Calu3 (cell line): ENCODE measurements at regions of chr20 and their contacts with region 1.

Region 1: GRCh38 chr20:40990542-40991120 is 38.0 kb upstream of the TOP1 start:
- DNase-seq: peak; percentile 91
- H3K4me3 Mint-ChIP-seq: no peak overlapping the region
- H3K27ac Mint-ChIP-seq: peak overlapping the region; percentile 70
- H3K4me1 Mint-ChIP-seq: peaks cover 18% of the 10 kb centered on the region
- H3K27me3 Mint-ChIP-seq: no peaks in the 10 kb centered on the region
- CTCF ChIP-seq: peak; percentile 85

Region 2: DNA sequence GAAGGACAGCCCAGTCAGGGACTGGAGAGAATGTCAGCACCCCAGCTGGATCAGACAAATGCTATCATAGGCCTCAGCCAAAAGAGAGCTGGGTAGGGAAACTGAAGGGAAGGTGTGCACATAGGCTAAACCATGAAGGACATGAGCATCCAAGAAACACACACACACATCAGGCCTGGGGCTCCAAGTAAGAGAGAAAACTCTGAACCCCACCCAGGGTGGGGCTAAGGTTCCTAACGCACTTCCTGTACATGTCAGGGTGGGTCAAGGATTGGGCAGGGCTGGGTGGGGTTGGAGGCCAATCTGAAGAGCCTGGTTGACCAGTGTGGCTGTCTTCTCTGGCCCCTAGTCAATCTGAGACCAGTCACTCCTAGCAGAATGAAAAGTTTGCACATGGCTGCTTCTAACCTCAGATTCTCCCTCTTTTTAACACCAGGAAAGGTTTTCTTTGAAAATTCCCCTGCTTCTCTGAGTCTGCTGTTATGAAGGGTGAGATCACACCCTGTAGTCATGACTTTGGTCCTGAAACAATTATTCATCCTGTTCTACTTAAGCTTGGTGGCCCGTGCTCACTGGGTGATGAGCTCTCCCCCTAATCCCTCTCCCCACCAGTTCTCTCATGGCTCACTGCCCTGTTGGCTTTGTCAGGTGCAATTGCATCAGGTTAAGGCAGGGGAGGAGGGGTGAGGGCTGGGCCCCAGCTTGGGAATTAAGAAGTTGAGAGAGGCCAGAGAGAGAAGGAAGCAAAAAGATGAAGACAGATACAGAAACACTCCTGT is 390.0 kb before region 1 on chr20:
- CTCF ChIA-PET with region 1: no interaction called
- intact Hi-C with region 1: no loop called
- DNase-seq: no peak
- H3K4me3 Mint-ChIP-seq: no peak overlapping the region
- H3K27ac Mint-ChIP-seq: no peak overlapping the region
- H3K4me1 Mint-ChIP-seq: no peaks in the 10 kb centered on the region
- H3K27me3 Mint-ChIP-seq: peaks cover 30% of the 10 kb centered on the region
- CTCF ChIP-seq: no peak

Region 3: DNA sequence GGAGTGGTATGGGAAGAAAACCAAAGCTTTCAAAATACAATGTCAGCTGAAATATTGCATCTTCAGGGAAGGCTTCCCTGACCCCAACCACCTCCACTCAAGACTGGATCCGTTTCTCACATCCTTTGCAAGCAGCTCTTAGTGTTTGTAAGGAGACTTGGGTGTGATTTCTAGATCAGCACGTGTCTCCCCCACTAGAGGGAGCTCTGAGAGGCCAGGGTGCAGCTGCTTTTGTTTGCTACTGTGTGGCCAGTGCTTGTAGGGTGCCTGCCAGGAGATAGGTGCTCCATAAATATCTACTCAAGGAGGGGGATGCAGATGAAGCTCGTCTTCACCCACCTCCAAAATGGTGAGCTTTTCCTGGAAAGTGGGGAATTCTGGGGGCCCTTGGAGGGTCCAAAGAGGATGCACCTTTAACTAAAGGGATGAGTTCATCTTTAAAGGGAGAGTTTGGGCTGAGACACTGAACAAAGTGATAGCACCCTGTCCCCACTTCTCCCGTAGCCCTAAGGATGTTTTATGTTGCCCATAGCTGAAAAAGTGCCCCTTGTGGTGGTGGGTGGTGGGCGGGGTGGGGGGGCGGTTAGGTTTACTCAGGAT is 249.0 kb before region 1 on chr20:
- CTCF ChIA-PET with region 1: no interaction called
- intact Hi-C with region 1: no loop called
- DNase-seq: peak; percentile 73
- H3K4me3 Mint-ChIP-seq: no peak overlapping the region
- H3K27ac Mint-ChIP-seq: no peak overlapping the region
- H3K4me1 Mint-ChIP-seq: no peaks in the 10 kb centered on the region
- H3K27me3 Mint-ChIP-seq: peaks cover 100% of the 10 kb centered on the region
- CTCF ChIP-seq: peak; percentile 65

Region 4: DNA sequence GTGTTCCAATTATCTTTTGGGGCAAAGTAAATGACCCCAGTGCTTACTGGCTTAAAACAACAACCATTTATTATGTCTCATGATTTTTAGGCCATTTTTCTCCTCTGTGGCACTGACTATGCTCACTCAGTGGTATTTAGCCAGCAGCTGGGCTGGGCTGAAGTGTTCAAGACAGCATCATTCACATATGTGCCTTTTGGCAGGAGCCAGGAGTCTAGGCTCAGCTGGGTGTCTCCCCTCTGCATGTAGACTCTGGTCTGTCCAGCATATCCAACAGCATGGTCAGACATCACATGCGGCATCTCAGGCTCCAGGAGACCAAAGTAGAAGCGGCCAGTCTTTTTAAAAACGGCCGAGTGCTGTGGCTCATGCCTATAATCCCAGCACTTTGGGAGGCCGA is 82.3 kb before region 1 on chr20:
- CTCF ChIA-PET with region 1: no interaction called
- intact Hi-C with region 1: no loop called
- DNase-seq: no peak
- H3K4me3 Mint-ChIP-seq: no peak overlapping the region
- H3K27ac Mint-ChIP-seq: no peak overlapping the region
- H3K4me1 Mint-ChIP-seq: no peaks in the 10 kb centered on the region
- H3K27me3 Mint-ChIP-seq: peaks cover 54% of the 10 kb centered on the region
- CTCF ChIP-seq: no peak

Region 5: GRCh38 chr20:41003143-41003883 is 12.7 kb after region 1 on chr20:
- CTCF ChIA-PET with region 1: interaction called, 12 read pairs
- intact Hi-C with region 1: no loop called
- DNase-seq: peak; percentile 93
- H3K4me3 Mint-ChIP-seq: peak overlapping the region; percentile 54
- H3K27ac Mint-ChIP-seq: peak overlapping the region; percentile 99
- H3K4me1 Mint-ChIP-seq: peaks cover 47% of the 10 kb centered on the region
- H3K27me3 Mint-ChIP-seq: no peaks in the 10 kb centered on the region
- CTCF ChIP-seq: no peak

Region 6: DNA sequence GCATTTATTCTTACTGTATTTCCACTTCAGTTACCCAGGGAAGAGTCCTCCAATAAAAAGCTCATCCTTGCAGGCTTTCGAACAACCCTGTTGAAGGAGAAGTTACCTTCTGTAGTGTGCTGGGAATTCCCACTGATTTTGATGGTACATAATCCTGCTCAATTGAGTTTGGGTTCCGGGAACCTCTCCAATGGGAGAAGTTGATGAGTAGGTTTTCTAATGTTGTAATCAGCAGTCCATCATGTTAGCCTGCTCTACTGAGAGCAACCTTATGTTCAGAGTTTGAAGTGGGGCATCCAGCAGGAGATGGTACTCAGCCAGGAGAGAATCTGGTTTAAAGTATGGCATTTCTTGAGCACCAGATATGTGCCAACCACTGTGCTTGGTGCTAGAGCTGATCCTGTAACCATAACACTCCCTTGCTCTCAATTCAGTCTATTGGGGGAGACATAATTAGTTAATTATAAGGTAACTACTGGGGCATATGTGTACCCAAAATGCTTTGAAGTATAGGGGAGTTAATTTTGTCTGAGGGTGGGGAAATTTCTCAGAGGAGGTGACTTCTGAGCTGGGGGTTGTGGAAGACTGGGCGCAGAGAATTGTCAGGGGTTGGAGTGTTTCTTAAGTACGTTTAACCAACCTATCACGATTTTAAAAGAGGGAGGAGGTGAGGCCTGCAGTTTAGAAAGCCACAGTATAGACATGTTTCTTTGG is 40.1 kb after region 1 on chr20:
- CTCF ChIA-PET with region 1: interaction called, 30 read pairs
- intact Hi-C with region 1: loop called (anchors 5 kb)
- DNase-seq: no peak
- H3K4me3 Mint-ChIP-seq: peak overlapping the region; percentile 83
- H3K27ac Mint-ChIP-seq: peak overlapping the region; percentile 97
- H3K4me1 Mint-ChIP-seq: peaks cover 64% of the 10 kb centered on the region
- H3K27me3 Mint-ChIP-seq: no peaks in the 10 kb centered on the region
- CTCF ChIP-seq: no peak

Region 7: DNA sequence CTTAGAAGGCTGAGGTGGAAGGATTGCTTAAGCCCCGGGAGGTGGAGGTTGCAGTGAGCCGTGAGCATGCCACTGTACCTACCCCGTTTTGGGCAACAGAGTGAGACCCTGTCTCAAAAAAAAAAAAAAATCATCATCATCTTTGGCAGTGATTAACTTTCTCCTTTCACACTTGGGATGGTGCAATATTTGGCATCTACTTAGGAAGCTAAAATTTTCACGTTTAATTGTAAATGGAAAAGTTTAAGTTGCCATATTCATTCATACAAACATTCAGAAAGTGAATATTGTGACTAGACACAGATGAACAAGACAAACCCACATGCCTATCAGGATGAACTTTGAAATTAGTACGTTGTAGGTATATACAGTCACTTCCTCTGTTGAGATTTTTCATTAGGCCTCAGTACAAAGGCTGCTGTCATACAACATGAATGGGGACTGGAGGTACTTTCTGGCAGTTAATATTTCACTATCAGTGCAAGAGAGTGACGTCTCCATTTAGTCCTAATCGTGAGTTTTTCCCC is 48.3 kb after region 1 on chr20:
- CTCF ChIA-PET with region 1: interaction called, 23 read pairs
- intact Hi-C with region 1: loop called (anchors 5 kb)
- DNase-seq: peak; percentile 39
- H3K4me3 Mint-ChIP-seq: peak overlapping the region; percentile 49
- H3K27ac Mint-ChIP-seq: peak overlapping the region; percentile 82
- H3K4me1 Mint-ChIP-seq: peaks cover 91% of the 10 kb centered on the region
- H3K27me3 Mint-ChIP-seq: no peaks in the 10 kb centered on the region
- CTCF ChIP-seq: no peak

Region 8: GRCh38 chr20:41072190-41072863 is 81.7 kb after region 1 on chr20:
- CTCF ChIA-PET with region 1: interaction called, 60 read pairs
- intact Hi-C with region 1: no loop called
- DNase-seq: peak; percentile 52
- H3K4me3 Mint-ChIP-seq: no peak overlapping the region
- H3K27ac Mint-ChIP-seq: peak overlapping the region; percentile 14
- H3K4me1 Mint-ChIP-seq: peaks cover 63% of the 10 kb centered on the region
- H3K27me3 Mint-ChIP-seq: no peaks in the 10 kb centered on the region
- CTCF ChIP-seq: no peak

Region 9: GRCh38 chr20:41078329-41078728 is 87.7 kb after region 1 on chr20:
- CTCF ChIA-PET with region 1: interaction called, 60 read pairs
- intact Hi-C with region 1: loop called (anchors 1 kb)
- DNase-seq: peak; percentile 61
- H3K4me3 Mint-ChIP-seq: no peak overlapping the region
- H3K27ac Mint-ChIP-seq: peak overlapping the region; percentile 57
- H3K4me1 Mint-ChIP-seq: peaks cover 43% of the 10 kb centered on the region
- H3K27me3 Mint-ChIP-seq: no peaks in the 10 kb centered on the region
- CTCF ChIP-seq: peak; percentile 58

Region 10: DNA sequence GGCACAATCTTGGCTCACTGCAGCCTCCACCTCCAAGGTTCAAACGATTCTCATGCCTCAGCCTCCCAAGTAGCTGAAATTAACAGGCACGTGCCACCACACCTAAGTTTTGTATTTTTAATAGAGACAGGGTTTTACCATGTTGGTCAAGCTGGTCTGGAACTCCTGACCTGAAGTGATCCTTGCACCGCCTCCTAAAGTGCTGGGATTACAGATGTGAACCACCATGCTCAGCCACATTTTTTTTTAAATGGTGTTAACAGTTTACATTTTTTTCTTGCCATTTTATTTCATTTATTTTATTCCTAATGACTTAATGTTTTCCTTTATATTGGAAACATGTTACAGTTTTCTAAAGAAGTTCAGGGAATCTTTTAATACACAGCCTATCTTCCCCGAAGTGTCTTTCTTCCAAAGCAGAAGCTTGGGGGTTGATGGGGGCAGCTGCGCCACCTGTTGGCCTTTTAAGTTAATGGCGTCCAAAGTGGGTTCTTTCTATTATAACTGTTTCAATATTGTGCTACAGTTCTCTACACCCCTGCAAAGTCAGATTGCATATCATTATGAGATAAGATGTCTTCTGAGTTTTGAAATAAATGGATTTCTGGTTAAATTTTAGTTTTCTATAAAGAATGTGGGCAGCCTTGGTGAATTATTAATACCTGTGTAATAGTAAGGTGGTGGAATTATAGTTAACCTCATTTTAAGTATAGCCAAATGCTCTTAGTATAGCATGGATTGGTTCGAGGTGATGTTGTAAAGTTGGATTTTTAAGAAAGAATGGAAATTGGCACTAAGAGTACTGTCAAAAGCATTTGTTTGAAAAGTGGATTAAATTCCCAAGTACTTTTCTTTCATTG is 104.7 kb after region 1 on chr20:
- CTCF ChIA-PET with region 1: interaction called, 61 read pairs
- intact Hi-C with region 1: loop called (anchors 1 kb)
- DNase-seq: peak; percentile 57
- H3K4me3 Mint-ChIP-seq: no peak overlapping the region
- H3K27ac Mint-ChIP-seq: no peak overlapping the region
- H3K4me1 Mint-ChIP-seq: no peaks in the 10 kb centered on the region
- H3K27me3 Mint-ChIP-seq: no peaks in the 10 kb centered on the region
- CTCF ChIP-seq: peak; percentile 89